ENCODE measurements at regions of chr12 and their contacts with region 1.

Region 1: DNA sequence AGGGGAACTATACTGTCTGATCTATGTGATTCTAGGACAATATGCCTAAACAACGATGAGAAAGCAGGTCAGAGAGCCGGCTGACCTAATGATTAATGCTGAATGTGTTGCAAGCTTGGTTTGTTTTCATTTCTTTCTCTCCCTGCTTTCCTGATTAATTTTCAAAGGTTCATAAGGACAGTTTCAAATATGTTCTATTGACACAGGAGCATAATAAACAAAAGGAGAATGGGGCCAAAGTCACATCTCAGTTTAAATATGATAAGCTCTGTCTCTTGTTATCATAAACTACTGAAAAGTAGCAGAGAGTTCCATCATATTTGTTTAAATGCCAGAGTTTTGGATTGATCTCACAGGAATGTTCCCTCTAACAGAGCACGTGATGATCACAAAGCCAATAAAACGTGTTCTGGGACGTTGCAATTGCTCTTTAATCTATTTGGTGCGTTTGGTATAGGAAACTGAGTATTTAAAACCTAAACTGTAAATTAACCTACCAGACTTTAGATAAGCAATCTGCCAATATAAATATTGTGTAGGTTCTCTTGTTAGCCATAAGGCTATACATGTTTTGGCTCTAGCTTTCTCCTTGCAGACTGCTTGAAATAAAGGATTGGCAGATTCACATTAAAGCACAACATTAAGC is 3.7 kb upstream of the HSD17B6 start:
- DNase-seq: no peak
- H3K4me3 ChIP-seq: no peak overlapping the region
- H3K27ac ChIP-seq: peak overlapping the region in 1 of 5 donors; percentile 15
- H3K4me1 ChIP-seq: peaks cover 0 to 12% (median 7%) of the 10 kb centered on the region in 4 donors
- H3K27me3 ChIP-seq: no peaks in the 10 kb centered on the region
- CTCF ChIP-seq: no peak
- EP300 ChIP-seq: no peak
- POLR2A ChIP-seq: no peak

Region 2: DNA sequence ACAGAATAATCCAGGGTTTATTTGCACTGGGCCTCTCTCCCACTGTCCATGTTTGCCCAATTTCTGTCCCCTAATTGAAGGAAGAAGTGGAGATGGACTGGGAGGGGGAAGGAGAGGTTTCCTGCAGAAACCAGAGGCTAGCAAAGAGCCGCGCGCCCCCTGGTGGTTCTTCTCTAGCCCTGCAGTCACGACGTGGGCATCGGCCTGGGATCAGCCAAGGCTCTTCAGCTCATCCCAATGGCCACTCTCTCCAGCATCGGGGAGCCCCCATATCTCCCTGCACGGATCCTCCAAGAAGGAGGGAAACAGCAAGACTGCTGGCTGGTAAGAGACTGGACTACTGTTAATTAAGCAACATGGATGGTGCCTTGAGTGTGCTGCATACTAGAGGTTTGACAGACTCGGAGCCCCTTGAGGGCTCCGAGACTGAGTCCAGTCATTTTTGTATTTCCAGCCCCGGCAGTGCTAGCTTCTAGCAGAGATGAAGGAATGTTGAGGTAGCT is 228.2 kb after region 1 on chr12:
- intact Hi-C with region 1: loop called (anchors 5 kb)
- DNase-seq: peak; percentile 81 to 90
- H3K4me3 ChIP-seq: no peak overlapping the region
- H3K27ac ChIP-seq: no peak overlapping the region
- H3K4me1 ChIP-seq: peaks cover 0 to 33% (median 26%) of the 10 kb centered on the region in 4 donors
- H3K27me3 ChIP-seq: no peaks in the 10 kb centered on the region
- CTCF ChIP-seq: peak in 5 of 7 experiments; percentile 82 to 95 (median 94)
- EP300 ChIP-seq: no peak
- POLR2A ChIP-seq: no peak

Region 3: GRCh38 chr12:57005980-57006808 is 246.8 kb after region 1 on chr12 and contains the start of gene ZBTB39:
- intact Hi-C with region 1: loop called (anchors 5 kb)
- DNase-seq: peak; percentile 67 to 87
- H3K4me3 ChIP-seq: peak within 1 kb of the TSS; percentile 92 to 98 (median 97)
- H3K27ac ChIP-seq: peak within 1 kb of the TSS; percentile 74 to 88 (median 84)
- H3K4me1 ChIP-seq: peaks cover 19 to 53% (median 39%) of the 10 kb centered on the region in 4 donors
- H3K27me3 ChIP-seq: no peaks in the 10 kb centered on the region
- CTCF ChIP-seq: peak in 3 of 7 experiments; percentile 29 to 71 (median 56)
- EP300 ChIP-seq: no peak
- POLR2A ChIP-seq: no peak
- total RNA-seq, gene ZBTB39: 3.3 to 7.6 (median 4.9) TPM